ENCODE measurements at regions of chr1 and their contacts with region 1.

Region 1: DNA sequence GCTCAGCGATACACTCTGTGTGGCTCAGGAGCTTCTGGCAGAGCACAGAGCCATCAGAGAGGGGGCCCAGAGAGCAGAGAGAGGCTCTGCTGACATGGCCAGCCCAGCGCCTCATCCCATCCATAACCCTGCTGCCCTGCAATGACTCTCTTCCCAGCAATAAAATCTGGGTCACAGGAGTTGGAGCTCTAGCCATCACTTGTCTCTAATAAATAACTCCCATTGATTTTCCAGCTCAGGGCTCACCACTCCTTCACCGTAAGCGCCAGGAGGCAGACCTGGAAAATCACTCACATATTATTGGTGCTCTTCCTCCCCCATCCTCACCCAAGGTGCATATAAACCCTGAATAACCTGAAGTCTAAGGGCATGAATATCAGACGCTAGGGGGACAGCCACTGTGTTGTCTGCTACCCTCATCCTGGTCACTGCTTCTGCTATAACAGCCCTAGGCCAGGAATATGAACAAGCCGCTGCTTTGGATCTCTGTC is at the start of gene APCS:
- DNase-seq: peak; percentile 66 to 88 (median 81)
- ATAC-seq: peak; percentile 67 to 92 (median 81)
- H3K4me3 ChIP-seq: peak within 1 kb of the TSS; percentile 59 to 71 (median 63)
- H3K27ac ChIP-seq: peak within 1 kb of the TSS; percentile 82 to 97 (median 89)
- H3K4me1 ChIP-seq: peaks cover 0 to 25% (median 5%) of the 10 kb centered on the region in 4 donors
- H3K27me3 ChIP-seq: no peaks in the 10 kb centered on the region
- CTCF ChIP-seq: peak; percentile 42 to 69 (median 46)
- POLR2A ChIP-seq: peak; percentile 99
- total RNA-seq, gene APCS: 958 to 1,977 (median 1,681) TPM

Region 2: GRCh38 chr1:159459551-159459950 is 128.0 kb before region 1 on chr1:
- intact Hi-C with region 1: no loop called
- DNase-seq: no peak
- ATAC-seq: no peak
- H3K4me3 ChIP-seq: no peak overlapping the region
- H3K27ac ChIP-seq: no peak overlapping the region
- H3K4me1 ChIP-seq: no peaks in the 10 kb centered on the region
- H3K27me3 ChIP-seq: no peaks in the 10 kb centered on the region
- CTCF ChIP-seq: no peak
- POLR2A ChIP-seq: no peak

Region 3: DNA sequence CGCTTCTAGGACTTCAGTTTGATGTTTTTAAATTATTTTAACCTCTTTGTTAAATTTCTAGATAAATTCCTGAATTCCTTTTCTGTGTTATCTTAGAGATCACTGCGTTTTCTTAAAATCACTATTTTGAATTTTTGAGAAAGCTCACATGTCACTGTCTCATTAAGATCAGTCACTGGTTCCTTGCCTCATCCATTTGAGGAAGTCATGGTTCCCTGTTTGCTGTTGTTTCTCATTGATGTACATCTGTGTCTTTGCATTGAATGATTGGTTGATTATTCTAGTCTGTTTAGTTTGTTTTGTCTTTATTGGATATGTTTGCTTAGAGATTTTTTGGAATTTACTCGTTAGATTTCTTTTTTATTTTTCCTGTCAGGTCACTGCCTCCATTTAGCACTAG is 76.7 kb after region 1 on chr1:
- intact Hi-C with region 1: no loop called
- DNase-seq: no peak
- ATAC-seq: no peak
- H3K4me3 ChIP-seq: no peak overlapping the region
- H3K27ac ChIP-seq: no peak overlapping the region
- H3K4me1 ChIP-seq: no peaks in the 10 kb centered on the region
- H3K27me3 ChIP-seq: no peaks in the 10 kb centered on the region
- CTCF ChIP-seq: no peak
- POLR2A ChIP-seq: no peak

Region 4: GRCh38 chr1:159752135-159752580 is 164.7 kb after region 1 on chr1:
- intact Hi-C with region 1: loop called in 1 of 2 experiments (anchors 5 kb)
- DNase-seq: peak; percentile 69 to 94 (median 80)
- ATAC-seq: peak; percentile 63 to 80 (median 72)
- H3K4me3 ChIP-seq: no peak overlapping the region
- H3K27ac ChIP-seq: peak overlapping the region in 2 of 3 donors; percentile 64 to 73
- H3K4me1 ChIP-seq: peaks cover 0 to 58% (median 28%) of the 10 kb centered on the region in 4 donors
- H3K27me3 ChIP-seq: no peaks in the 10 kb centered on the region
- CTCF ChIP-seq: no peak
- POLR2A ChIP-seq: no peak

Region 5: GRCh38 chr1:160047111-160047991 is 459.8 kb after region 1 on chr1:
- intact Hi-C with region 1: no loop called
- DNase-seq: no peak
- ATAC-seq: no peak
- H3K4me3 ChIP-seq: no peak overlapping the region
- H3K27ac ChIP-seq: no peak overlapping the region
- H3K4me1 ChIP-seq: peaks cover 0 to 14% (median 0%) of the 10 kb centered on the region in 4 donors
- H3K27me3 ChIP-seq: no peaks in the 10 kb centered on the region
- CTCF ChIP-seq: no peak
- POLR2A ChIP-seq: no peak